ENCODE measurements at regions of chr6 and their contacts with region 1.

Region 1: DNA sequence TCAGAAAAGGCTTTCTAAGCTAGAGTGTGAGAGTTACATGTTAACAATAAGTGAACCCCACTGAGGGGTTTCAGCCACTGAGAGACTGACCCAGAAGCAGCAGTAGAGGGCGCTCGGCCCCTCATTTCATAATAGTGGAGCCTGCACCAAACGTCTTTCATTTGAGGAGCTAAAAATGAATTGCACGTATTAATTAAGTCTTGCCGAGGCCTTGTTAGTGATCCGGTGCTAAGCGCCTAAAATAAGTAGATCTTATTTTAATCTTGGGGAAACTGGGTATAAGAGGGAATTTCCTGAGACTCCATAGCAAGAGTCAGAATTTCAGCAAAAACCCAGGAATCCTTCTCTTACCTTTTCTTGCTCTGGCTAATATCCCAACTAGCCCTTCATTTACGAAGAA is 209.7 kb downstream of the FARS2 start:
- DNase-seq: peak; percentile 19
- ATAC-seq: peak; percentile 95
- H3K4me3 ChIP-seq: no peak overlapping the region
- H3K27ac ChIP-seq: no peak overlapping the region
- H3K4me1 ChIP-seq: no peaks in the 10 kb centered on the region
- H3K27me3 ChIP-seq: no peaks in the 10 kb centered on the region
- CTCF ChIP-seq: peak; percentile 73 to 89 (median 89)
- POLR2A ChIP-seq: no peak
- RAD21 ChIP-seq: peak; percentile 83

Region 2: DNA sequence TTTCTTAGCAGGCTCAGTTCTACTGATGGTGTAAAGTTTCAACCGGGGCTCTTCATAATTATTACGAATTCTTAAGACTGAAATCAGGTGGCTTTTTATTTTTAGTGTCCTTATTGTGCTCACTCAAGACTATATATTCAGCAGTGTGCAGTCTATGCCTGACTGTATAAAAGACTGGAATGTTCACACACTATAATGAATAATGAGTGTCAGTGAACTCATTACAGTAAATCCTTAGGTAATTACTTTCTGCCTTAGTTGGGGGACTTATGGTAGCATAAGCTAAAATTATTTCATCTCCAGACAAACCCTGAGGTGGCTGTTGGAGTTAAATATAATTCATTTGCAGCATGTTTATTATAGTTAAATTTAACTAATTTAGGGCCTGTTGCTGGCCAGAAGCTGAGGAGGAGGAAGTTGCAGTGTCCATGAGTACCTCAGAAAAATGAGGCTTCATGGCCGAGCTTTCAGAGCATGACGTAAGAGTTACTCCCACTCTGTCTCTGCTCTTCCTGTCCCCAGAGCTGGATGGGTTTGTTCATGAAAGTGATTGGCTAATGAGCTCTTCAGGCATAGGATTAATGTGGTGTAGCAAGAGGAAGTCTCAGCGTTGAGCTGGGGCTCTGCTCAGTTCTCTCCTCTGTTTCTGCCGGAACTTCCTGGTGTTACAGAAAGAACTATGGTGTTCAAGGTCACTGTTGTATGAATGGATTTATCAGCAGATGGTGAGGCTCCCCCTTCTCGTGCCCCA is 199.9 kb after region 1 on chr6:
- CTCF ChIA-PET with region 1: interaction called, 10 read pairs
- POLR2A ChIA-PET with region 1: no interaction called
- RAD21 ChIA-PET with region 1: no interaction called
- intact Hi-C with region 1: no loop called
- DNase-seq: no peak
- ATAC-seq: no peak
- H3K4me3 ChIP-seq: no peak overlapping the region
- H3K27ac ChIP-seq: no peak overlapping the region
- H3K4me1 ChIP-seq: no peaks in the 10 kb centered on the region
- H3K27me3 ChIP-seq: no peaks in the 10 kb centered on the region
- CTCF ChIP-seq: no peak
- POLR2A ChIP-seq: no peak
- RAD21 ChIP-seq: no peak

Region 3: GRCh38 chr6:5766260-5766659 is 295.2 kb after region 1 on chr6:
- CTCF ChIA-PET with region 1: no interaction called
- POLR2A ChIA-PET with region 1: no interaction called
- RAD21 ChIA-PET with region 1: no interaction called
- intact Hi-C with region 1: loop called (anchors 1 kb)
- DNase-seq: no peak
- ATAC-seq: 0 out of 2 replicates have a peak, but pooled peaks have one; percentile 53
- H3K4me3 ChIP-seq: no peak overlapping the region
- H3K27ac ChIP-seq: no peak overlapping the region
- H3K4me1 ChIP-seq: no peaks in the 10 kb centered on the region
- H3K27me3 ChIP-seq: no peaks in the 10 kb centered on the region
- CTCF ChIP-seq: peak in 2 of 3 experiments; percentile 30 to 31; a peak in 3 of 6 replicates
- POLR2A ChIP-seq: no peak
- RAD21 ChIP-seq: peak; percentile 44

Region 4: DNA sequence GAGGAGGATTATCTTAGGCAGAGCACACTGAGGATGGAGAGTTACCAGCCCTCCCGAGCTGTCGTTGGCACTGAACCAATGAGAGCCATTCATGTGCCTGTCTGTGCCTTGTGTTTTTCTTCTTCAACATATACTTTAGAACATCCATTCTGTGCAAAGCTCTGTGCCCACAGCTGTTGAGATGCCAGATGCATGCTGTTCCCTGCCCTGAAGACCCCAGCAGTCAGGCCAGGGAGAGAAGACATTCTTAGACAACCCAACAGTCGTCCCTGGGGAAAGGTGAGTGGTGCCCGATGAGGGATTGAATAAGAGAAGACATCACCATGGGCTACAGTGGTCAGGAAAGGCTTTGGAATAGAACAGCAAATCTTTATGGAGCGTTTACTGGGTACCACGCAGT is 421.6 kb after region 1 on chr6:
- CTCF ChIA-PET with region 1: interaction called, 3 read pairs
- POLR2A ChIA-PET with region 1: no interaction called
- RAD21 ChIA-PET with region 1: interaction called in 1 of 2 experiments, 3 read pairs
- intact Hi-C with region 1: loop called (anchors 2 kb)
- DNase-seq: no peak
- ATAC-seq: peak; percentile 38
- H3K4me3 ChIP-seq: peak overlapping the region; percentile 29 to 60
- H3K27ac ChIP-seq: peak overlapping the region; percentile 84
- H3K4me1 ChIP-seq: peaks cover 7 to 10% of the 10 kb centered on the region in 2 experiments; a peak in 3 of 4 replicates
- H3K27me3 ChIP-seq: no peaks in the 10 kb centered on the region
- CTCF ChIP-seq: no peak
- POLR2A ChIP-seq: no peak
- RAD21 ChIP-seq: no peak

Region 5: GRCh38 chr6:6131492-6132109 is 660.6 kb after region 1 on chr6:
- CTCF ChIA-PET with region 1: interaction called, 4 read pairs
- POLR2A ChIA-PET with region 1: no interaction called
- RAD21 ChIA-PET with region 1: no interaction called
- intact Hi-C with region 1: loop called (anchors 5 kb)
- DNase-seq: peak; percentile 10
- ATAC-seq: peak; percentile 64; the same call in 1 of the 2 replicates
- H3K4me3 ChIP-seq: no peak overlapping the region
- H3K27ac ChIP-seq: no peak overlapping the region
- H3K4me1 ChIP-seq: no peaks in the 10 kb centered on the region
- H3K27me3 ChIP-seq: peaks cover 17% of the 10 kb centered on the region
- CTCF ChIP-seq: peak; percentile 36 to 70 (median 51); a peak in 5 of 6 replicates
- POLR2A ChIP-seq: no peak
- RAD21 ChIP-seq: peak; percentile 52

Region 6: GRCh38 chr6:6547110-6547879 is 1076.3 kb after region 1 on chr6:
- CTCF ChIA-PET with region 1: interaction called, 5 read pairs
- POLR2A ChIA-PET with region 1: no interaction called
- RAD21 ChIA-PET with region 1: interaction called in 1 of 2 experiments, 3 read pairs
- intact Hi-C with region 1: loop called (anchors 2 kb)
- DNase-seq: peak; percentile 39
- ATAC-seq: peak; percentile 99
- H3K4me3 ChIP-seq: no peak overlapping the region
- H3K27ac ChIP-seq: no peak overlapping the region
- H3K4me1 ChIP-seq: no peaks in the 10 kb centered on the region
- H3K27me3 ChIP-seq: peaks cover 22% of the 10 kb centered on the region; the same call in 1 of the 2 replicates
- CTCF ChIP-seq: peak; percentile 62 to 93 (median 81)
- POLR2A ChIP-seq: no peak
- RAD21 ChIP-seq: peak; percentile 92